ENCODE measurements at regions of chr6 and their contacts with region 1.

Region 1: DNA sequence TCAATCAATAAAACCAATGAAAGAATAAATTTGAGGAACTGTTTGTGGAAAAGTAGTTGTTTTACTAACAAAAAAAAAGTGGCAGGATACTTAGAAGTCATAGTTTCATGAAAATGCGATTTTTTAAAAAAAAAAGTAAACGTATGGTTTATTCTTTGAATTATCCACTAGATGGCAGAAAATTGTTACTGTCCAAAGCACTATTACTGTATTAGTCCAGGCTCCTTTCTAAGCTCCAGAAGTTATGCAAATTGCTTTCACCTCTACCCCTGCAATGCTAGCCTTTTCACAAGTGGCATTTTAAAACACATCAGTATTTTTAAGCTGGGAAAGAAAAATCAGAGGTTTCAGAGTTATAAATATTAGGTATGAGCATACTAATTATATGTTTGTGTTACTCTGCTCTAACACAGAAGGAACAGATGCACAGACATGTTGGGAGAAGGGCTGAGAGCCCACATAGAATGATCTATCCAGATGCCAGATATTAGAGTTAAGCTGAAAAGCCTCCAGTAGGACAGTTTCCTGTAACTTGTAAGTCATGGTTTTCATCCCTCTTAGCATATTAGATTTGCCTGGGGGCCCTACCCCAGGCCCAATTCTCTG is 63.9 kb downstream of the FHL5 start:
- DNase-seq: no peak
- ATAC-seq: peak; percentile 57
- H3K4me3 Mint-ChIP-seq: no peak overlapping the region
- H3K27ac Mint-ChIP-seq: no peak overlapping the region
- H3K4me1 Mint-ChIP-seq: peaks cover 6% of the 10 kb centered on the region
- H3K27me3 Mint-ChIP-seq: peaks cover 4% of the 10 kb centered on the region
- CTCF ChIP-seq: no peak

Region 2: GRCh38 chr6:96611342-96611991 is 15.4 kb before region 1 on chr6:
- CTCF ChIA-PET with region 1: interaction called, 6 read pairs
- POLR2A ChIA-PET with region 1: no interaction called
- intact Hi-C with region 1: loop called (anchors 2 kb)
- DNase-seq: no peak
- ATAC-seq: peak; percentile 47
- H3K4me3 Mint-ChIP-seq: no peak overlapping the region
- H3K27ac Mint-ChIP-seq: no peak overlapping the region
- H3K4me1 Mint-ChIP-seq: peaks cover 28% of the 10 kb centered on the region
- H3K27me3 Mint-ChIP-seq: peaks cover 6% of the 10 kb centered on the region
- CTCF ChIP-seq: no peak

Region 3: DNA sequence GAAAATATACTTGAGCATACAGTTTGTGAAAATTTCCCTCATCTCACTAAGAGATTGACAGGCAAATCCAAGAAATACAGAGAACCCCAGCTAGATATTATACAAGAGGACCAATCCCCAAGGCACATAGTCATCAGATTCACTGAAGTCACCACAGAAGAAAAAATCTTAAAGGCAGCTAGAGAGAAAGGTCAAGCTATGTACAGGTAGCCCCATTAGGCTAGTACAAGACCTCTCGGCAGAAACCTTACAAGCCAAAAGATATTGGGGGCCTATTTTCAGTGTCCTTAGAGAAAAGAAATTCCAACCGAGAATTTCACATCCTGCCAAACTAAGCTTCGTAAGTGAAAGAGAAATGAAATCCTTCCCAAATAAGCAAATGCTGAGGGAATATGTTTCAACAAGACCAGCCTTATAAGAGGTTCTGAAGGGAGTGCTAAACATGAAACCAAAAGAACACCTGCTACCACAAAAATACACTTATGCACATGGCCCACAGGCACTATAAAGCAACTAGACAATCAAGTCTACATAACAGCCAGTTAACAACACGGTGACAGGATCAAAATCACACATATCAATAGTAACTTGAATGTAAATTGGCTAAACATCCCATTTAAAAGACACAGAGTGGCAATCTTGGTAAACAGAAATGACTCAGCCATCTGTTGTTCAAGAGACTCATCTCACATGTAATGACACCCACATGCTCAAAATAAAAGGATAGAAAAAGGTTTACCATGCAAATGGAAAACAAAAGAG is 32.4 kb after region 1 on chr6:
- CTCF ChIA-PET with region 1: no interaction called
- POLR2A ChIA-PET with region 1: no interaction called
- intact Hi-C with region 1: no loop called
- DNase-seq: no peak
- ATAC-seq: no peak
- H3K4me3 Mint-ChIP-seq: no peak overlapping the region
- H3K27ac Mint-ChIP-seq: no peak overlapping the region
- H3K4me1 Mint-ChIP-seq: no peaks in the 10 kb centered on the region
- H3K27me3 Mint-ChIP-seq: peaks cover 2% of the 10 kb centered on the region
- CTCF ChIP-seq: no peak

Region 4: DNA sequence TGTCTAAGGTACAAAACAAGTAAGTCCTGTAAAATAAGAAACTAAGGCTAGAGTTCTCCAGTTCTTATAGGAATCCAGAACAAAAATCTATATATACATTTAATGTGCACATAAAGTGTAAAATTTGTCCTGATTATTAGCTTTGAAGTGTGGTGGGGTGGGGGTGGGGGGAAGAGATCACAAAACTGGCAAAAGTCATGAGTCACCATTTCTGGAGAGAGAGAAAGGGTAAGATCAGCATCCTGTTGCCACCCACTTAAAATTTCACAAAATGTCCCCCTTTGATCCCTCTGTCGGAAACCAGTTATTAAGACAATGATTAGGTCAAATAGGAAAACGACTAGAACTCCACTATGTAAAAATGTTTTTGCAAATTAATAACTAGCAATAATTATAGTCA is 1725.5 kb after region 1 on chr6:
- CTCF ChIA-PET with region 1: no interaction called
- POLR2A ChIA-PET with region 1: no interaction called
- intact Hi-C with region 1: no loop called
- DNase-seq: no peak
- ATAC-seq: no peak
- H3K4me3 Mint-ChIP-seq: no peak overlapping the region
- H3K27ac Mint-ChIP-seq: no peak overlapping the region
- H3K4me1 Mint-ChIP-seq: no peaks in the 10 kb centered on the region
- H3K27me3 Mint-ChIP-seq: no peaks in the 10 kb centered on the region
- CTCF ChIP-seq: no peak